GM10248 (cell line): ENCODE measurements at regions of chr14 and their contacts with region 1.

Region 1: GRCh38 chr14:75577729-75578101 is 705 bp upstream of the FLVCR2 start:
- DNase-seq: peak; percentile 88
- CTCF ChIP-seq: peak; percentile 83

Region 2: GRCh38 chr14:75522224-75522982 is 55.3 kb before region 1 on chr14 and contains the start of gene BATF:
- CTCF ChIA-PET with region 1: interaction called, 13 read pairs
- POLR2A ChIA-PET with region 1: no interaction called
- DNase-seq: peak; percentile 77
- CTCF ChIP-seq: no peak

Region 3: DNA sequence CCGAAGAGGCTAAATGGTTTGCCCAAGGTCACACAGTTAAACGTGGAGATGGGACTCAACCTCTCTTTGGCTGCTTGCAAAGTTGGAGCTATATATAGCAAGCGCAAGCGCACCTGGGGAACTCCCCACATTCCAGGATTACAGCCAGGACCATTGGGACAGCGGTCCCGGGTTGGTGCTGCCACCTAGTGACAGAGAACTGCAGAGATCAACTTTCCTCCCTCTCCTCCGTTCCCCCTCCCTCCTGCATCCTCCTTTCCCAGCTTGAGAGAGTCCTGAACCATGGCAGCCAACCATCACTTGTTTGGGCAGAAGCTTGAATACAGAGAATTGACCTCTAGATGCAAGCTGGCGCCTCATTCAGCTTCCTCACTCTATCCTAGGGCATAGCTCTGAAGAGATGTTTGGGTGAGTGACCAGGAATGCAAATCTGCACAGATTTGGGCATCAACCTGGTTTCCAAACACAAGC is 16.7 kb before region 1 on chr14:
- CTCF ChIA-PET with region 1: interaction called, 127 read pairs
- POLR2A ChIA-PET with region 1: no interaction called
- DNase-seq: peak; percentile 61
- CTCF ChIP-seq: peak; percentile 76

Region 4: GRCh38 chr14:75589931-75590330 is 12.2 kb after region 1 on chr14:
- CTCF ChIA-PET with region 1: interaction called, 33 read pairs
- POLR2A ChIA-PET with region 1: no interaction called
- DNase-seq: no peak
- CTCF ChIP-seq: no peak

Region 5: GRCh38 chr14:75619548-75619947 is 41.8 kb after region 1 on chr14:
- CTCF ChIA-PET with region 1: interaction called, 14 read pairs
- POLR2A ChIA-PET with region 1: no interaction called
- DNase-seq: no peak
- CTCF ChIP-seq: no peak

Region 6: GRCh38 chr14:75660630-75661494 is 83.1 kb after region 1 on chr14 and contains the starts of genes ERG28 and TTLL5:
- CTCF ChIA-PET with region 1: interaction called, 312 read pairs
- POLR2A ChIA-PET with region 1: interaction called, 5 read pairs
- DNase-seq: peak; percentile 98
- CTCF ChIP-seq: no peak